ENCODE measurements at regions of chr2 and their contacts with region 1.

Region 1: GRCh38 chr2:232600053-232600773 is 33.2 kb upstream of the EFHD1 start:
- DNase-seq: no peak
- ATAC-seq: no peak
- H3K4me3 ChIP-seq: no peak overlapping the region
- H3K27ac ChIP-seq: no peak overlapping the region
- H3K4me1 ChIP-seq: no peaks in the 10 kb centered on the region
- H3K27me3 ChIP-seq: no peaks in the 10 kb centered on the region
- CTCF ChIP-seq: no peak

Region 2: DNA sequence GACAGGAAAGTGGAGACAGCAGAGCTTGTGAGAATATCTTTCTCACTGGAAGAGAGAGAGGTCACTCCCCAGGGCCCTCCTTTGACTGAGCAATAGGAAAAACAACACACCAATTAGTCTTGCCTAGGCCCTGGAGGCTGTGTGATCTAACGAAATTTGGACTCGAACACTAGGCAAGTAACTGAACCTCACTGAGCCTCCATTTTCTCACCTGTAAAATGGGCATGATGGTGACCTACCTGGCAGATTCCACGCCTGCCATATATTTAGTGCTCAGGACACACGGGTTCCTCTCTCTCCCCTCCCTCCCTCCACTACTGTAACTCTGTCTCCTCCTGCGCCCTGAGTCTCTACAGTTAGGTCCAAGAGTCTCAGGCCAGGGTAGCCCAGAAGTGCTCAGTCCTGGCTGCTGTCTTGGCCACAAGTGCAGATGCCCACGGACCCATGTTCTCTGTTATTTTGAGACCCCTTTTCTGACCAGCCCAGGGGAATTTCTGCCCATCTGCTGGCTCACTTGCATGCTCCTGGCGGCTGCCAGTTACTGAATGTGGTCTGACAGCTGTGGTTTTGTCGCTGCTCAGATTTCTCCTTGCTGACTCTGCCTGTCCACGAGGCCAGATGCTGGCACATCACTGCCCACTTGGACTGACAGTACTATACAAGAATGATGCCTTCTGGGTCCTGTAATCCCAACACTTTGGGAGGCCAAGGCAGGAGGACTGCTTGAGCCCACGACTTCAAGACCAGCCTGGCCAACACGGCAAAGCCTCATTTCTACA is 87.4 kb after region 1 on chr2:
- CTCF ChIA-PET with region 1: interaction called, 13 read pairs
- POLR2A ChIA-PET with region 1: no interaction called
- in situ Hi-C with region 1: no loop called
- intact Hi-C with region 1: no loop called
- DNase-seq: no peak
- ATAC-seq: no peak
- H3K4me3 ChIP-seq: no peak overlapping the region
- H3K27ac ChIP-seq: no peak overlapping the region
- H3K4me1 ChIP-seq: no peaks in the 10 kb centered on the region
- H3K27me3 ChIP-seq: no peaks in the 10 kb centered on the region
- CTCF ChIP-seq: no peak

Measured in Panc1 (cell line).